ENCODE measurements at regions of chr15 and their contacts with region 1.

Region 1: GRCh38 chr15:63891079-63891767 is 57.5 kb upstream of the HERC1 start:
- DNase-seq: peak; percentile 90
- H3K4me3 ChIP-seq: no peak overlapping the region
- H3K27ac ChIP-seq: no peak overlapping the region
- H3K4me1 ChIP-seq: peaks cover 2% of the 10 kb centered on the region
- H3K27me3 ChIP-seq: no peaks in the 10 kb centered on the region
- CTCF ChIP-seq: peak; percentile 80
- POLR2A ChIP-seq: no peak

Region 2: DNA sequence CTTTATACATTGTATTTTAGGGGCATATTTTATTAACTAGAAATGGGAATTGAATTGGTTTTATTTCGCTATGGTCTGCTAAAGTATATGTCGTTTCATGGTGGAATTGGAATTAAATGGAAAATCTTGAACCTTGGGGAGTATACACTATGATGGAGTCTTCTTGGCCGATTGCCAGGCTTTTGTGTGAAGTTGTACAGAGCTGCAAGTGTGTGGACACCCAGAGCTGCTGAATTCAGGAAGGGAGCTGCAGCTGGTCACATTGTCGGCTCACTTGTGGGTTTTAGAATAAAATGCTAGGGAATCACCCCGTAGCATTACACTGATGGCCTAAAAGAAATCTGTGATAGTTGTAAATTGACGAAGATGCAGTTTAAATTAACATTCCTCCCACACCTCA is 351.7 kb before region 1 on chr15:
- CTCF ChIA-PET with region 1: no interaction called
- POLR2A ChIA-PET with region 1: no interaction called
- dilution Hi-C with region 1: no loop called
- intact Hi-C with region 1: no loop called
- DNase-seq: peak; percentile 69
- H3K4me3 ChIP-seq: no peak overlapping the region
- H3K27ac ChIP-seq: no peak overlapping the region
- H3K4me1 ChIP-seq: peaks cover 7% of the 10 kb centered on the region
- H3K27me3 ChIP-seq: no peaks in the 10 kb centered on the region
- CTCF ChIP-seq: no peak
- POLR2A ChIP-seq: no peak

Region 3: DNA sequence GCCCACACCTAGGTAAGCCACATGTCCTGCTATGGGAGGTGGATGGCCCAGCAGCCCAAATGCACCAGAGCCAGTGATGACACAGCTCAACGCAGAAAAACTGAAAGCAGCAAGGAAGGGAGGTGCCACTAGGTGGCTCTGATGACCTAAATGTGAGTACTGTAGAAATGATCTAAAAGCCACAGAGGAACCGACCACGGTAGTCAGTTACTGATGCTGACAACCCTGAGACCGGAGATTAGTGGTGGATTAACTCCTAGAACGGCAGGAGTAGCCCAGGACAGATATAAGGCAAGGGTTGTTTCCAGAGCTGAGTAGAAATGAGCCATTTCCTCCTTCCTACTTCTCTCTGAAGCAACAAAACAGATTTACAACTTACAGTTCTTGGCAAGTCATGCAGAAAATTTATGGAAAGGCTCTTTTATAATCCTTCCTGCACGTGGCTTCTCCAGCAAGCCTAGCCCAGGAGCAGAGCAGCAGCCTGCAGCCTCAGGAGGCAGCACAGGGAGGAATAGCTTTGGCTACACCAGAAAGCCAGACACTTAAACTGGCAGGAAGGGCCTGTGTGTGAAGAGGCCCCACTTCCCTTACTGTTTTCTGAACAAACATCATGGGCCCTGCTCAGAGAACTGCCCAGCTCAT is 280.9 kb before region 1 on chr15:
- CTCF ChIA-PET with region 1: interaction called, 5 read pairs
- POLR2A ChIA-PET with region 1: no interaction called
- dilution Hi-C with region 1: no loop called
- intact Hi-C with region 1: loop called (anchors 5 kb)
- DNase-seq: peak; percentile 85
- H3K4me3 ChIP-seq: no peak overlapping the region
- H3K27ac ChIP-seq: peak overlapping the region; percentile 18
- H3K4me1 ChIP-seq: peaks cover 18% of the 10 kb centered on the region
- H3K27me3 ChIP-seq: no peaks in the 10 kb centered on the region
- CTCF ChIP-seq: peak; percentile 70 to 73
- POLR2A ChIP-seq: no peak

Region 4: GRCh38 chr15:63826528-63826927 is 64.7 kb before region 1 on chr15:
- CTCF ChIA-PET with region 1: interaction called, 60 read pairs
- POLR2A ChIA-PET with region 1: interaction called, 3 read pairs
- dilution Hi-C with region 1: no loop called
- intact Hi-C with region 1: loop called (anchors 1 kb)
- DNase-seq: peak; percentile 47
- H3K4me3 ChIP-seq: no peak overlapping the region
- H3K27ac ChIP-seq: no peak overlapping the region
- H3K4me1 ChIP-seq: peaks cover 4% of the 10 kb centered on the region
- H3K27me3 ChIP-seq: no peaks in the 10 kb centered on the region
- CTCF ChIP-seq: peak in 1 of 2 donors; percentile 10
- POLR2A ChIP-seq: no peak

Region 5: GRCh38 chr15:63858880-63859279 is 32.3 kb before region 1 on chr15:
- CTCF ChIA-PET with region 1: interaction called, 7 read pairs
- POLR2A ChIA-PET with region 1: no interaction called
- dilution Hi-C with region 1: no loop called
- intact Hi-C with region 1: loop called (anchors 1 kb)
- DNase-seq: peak; percentile 95
- H3K4me3 ChIP-seq: no peak overlapping the region
- H3K27ac ChIP-seq: peak overlapping the region; percentile 90
- H3K4me1 ChIP-seq: peaks cover 28% of the 10 kb centered on the region
- H3K27me3 ChIP-seq: no peaks in the 10 kb centered on the region
- CTCF ChIP-seq: no peak
- POLR2A ChIP-seq: no peak

Region 6: DNA sequence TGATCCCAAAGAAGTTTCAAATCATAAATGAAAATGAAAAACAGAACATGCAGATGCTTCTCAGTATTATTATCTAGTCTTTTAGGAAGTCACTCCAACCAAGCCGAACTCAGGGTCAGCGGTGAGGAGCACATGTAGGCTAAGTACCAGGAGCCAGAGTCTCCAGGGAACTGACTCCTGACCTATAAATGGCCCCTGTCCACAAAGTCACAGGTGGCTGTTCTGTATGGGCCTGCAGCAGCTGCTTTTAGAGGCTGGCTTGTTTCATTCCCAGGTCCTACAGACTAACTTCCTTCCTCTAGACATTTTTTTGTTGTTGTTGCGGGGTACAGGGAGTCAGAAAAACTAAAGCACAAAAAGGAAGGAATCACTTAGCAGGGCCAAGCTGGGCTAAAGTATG is 100.5 kb after region 1 on chr15:
- CTCF ChIA-PET with region 1: no interaction called
- POLR2A ChIA-PET with region 1: no interaction called
- dilution Hi-C with region 1: no loop called
- intact Hi-C with region 1: no loop called
- DNase-seq: peak; percentile 36
- H3K4me3 ChIP-seq: no peak overlapping the region
- H3K27ac ChIP-seq: no peak overlapping the region
- H3K4me1 ChIP-seq: peaks cover 11% of the 10 kb centered on the region
- H3K27me3 ChIP-seq: no peaks in the 10 kb centered on the region
- CTCF ChIP-seq: no peak
- POLR2A ChIP-seq: no peak

Region 7: DNA sequence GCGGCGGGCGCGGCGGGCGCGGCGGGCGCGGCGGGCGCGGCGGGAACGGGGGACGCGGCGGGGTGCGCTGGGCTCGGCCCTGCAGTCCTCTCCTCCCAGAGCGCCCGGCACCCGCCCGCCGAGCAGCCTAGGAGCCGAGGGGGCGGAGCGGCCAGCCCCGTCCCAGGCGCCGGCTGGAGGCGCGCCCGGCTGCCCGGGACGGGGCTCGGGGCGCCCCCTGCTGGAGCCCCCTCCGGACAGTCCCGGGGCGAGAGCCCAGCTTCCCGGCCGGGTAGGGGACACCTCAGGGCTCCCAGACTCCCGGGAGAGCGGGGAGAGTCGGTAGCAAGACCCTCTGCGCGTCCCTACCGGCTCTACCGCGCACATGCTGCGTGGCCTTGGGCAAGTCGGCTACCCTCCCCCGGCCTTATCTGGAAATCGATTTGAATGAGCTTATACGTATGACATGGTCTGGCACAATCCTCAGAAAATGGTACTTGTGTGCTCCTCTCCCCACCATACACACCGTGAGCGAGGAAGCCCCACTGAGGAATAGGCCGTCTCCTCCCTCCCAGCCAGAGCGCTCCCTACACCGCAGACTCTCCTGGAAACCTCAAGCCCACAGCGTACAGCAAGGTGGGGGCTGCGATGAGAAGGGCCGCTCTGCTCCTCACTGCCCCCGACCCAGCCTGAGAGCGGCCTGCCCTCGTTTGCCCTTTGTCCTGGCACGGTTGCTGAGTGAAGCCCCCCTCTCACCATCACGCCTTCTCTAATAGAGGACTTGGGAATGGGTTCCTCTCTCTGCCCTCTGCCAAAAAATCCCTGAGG is 155.3 kb after region 1 on chr15 and contains the start of gene DAPK2:
- CTCF ChIA-PET with region 1: interaction called, 6 read pairs
- POLR2A ChIA-PET with region 1: no interaction called
- dilution Hi-C with region 1: no loop called
- intact Hi-C with region 1: loop called (anchors 1 kb)
- DNase-seq: peak; percentile 57
- H3K4me3 ChIP-seq: peak within 1 kb of the TSS in 2 of 3 experiments; percentile 5 to 45
- H3K27ac ChIP-seq: no peak within 1 kb of the TSS
- H3K4me1 ChIP-seq: peaks cover 6% of the 10 kb centered on the region
- H3K27me3 ChIP-seq: peaks cover 13 to 19% of the 10 kb centered on the region in 2 experiments
- CTCF ChIP-seq: peak; percentile 79 to 82
- POLR2A ChIP-seq: no peak
- total RNA-seq, gene DAPK2: 6.7 and 7.5 TPM in 2 replicates

Region 8: DNA sequence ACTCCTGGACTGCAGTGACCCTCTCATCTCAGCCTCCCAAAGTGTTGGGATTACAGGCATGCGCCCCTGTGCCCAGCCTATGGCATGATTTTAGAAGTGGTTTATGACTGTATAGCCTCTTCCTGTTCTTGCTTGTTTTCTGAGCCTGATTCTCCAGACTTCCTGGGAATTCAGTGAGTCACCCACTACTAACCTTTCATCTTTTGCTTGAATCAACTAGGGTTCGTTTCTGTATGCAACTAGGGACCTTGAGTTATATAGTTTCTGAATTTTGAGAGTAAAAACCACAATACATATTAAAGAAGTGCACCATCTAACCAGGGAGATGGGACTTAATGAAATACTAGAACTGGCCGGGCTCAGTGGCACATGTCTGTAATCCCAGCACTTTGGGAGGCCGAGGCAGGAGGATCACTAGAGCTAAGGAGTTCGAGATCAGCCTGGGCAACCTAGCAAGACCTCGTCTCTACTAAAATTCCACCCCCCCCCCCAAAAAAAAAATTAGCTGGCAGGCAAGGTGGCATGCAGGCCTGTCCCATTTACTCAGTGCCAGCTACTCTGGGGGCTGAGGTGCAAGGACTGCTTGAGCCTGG is 645.1 kb after region 1 on chr15:
- CTCF ChIA-PET with region 1: no interaction called
- POLR2A ChIA-PET with region 1: no interaction called
- dilution Hi-C with region 1: no loop called
- intact Hi-C with region 1: no loop called
- DNase-seq: peak; percentile 91
- H3K4me3 ChIP-seq: no peak overlapping the region
- H3K27ac ChIP-seq: peak overlapping the region; percentile 89
- H3K4me1 ChIP-seq: peaks cover 16% of the 10 kb centered on the region
- H3K27me3 ChIP-seq: no peaks in the 10 kb centered on the region
- CTCF ChIP-seq: no peak
- POLR2A ChIP-seq: no peak

Region 9: GRCh38 chr15:64681424-64682024 is 790.3 kb after region 1 on chr15:
- CTCF ChIA-PET with region 1: no interaction called
- POLR2A ChIA-PET with region 1: no interaction called
- dilution Hi-C with region 1: no loop called
- intact Hi-C with region 1: no loop called
- DNase-seq: peak; percentile 70
- H3K4me3 ChIP-seq: no peak overlapping the region
- H3K27ac ChIP-seq: no peak overlapping the region
- H3K4me1 ChIP-seq: no peaks in the 10 kb centered on the region
- H3K27me3 ChIP-seq: no peaks in the 10 kb centered on the region
- CTCF ChIP-seq: peak; percentile 62 to 72
- POLR2A ChIP-seq: no peak

Measured in endothelial cell of umbilical vein (primary cell).